ENCODE measurements at regions of chr5 and their contacts with region 1.

Region 1: DNA sequence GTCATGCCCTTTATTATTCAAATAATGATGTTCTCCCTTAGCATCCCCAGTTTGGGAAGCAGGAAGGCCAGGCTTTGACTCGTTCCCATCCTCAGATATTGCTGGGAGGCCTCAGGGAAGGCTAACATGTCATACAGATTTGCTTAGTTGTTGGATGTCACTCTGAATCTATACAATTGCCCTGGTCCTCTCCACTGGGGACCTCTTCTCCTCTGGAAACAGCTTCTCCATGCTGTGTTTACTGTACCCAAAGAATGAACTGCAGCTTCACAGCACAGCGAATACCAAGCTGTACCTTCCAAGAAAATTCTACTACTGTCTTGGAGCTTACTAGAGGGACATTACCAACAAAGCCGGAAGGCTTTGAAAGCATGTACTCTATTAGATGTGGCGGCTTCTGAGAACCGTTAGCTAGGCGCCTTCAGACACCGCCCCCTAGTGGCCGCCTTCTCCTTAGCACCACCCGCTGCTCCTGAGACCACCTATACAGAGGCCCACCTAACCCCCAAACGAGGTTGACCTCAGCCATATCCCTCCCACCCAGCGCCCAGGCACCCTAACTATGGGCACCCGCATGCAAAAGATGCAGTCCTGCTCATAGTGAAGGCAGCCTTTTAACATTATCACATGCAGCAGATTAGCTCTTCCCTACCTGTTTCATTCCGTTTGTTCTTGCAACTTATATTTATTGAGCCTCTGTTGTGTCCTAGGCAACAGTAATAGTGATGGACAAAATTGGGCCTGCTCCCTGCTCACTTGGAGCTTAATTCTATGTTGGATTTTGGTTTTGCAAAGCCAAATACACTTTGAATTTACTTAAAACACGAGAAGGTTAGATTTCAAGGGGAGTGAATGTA is 34.9 kb upstream of the FOXI1 start:
- DNase-seq: peak; percentile 45
- ATAC-seq: no peak
- H3K4me3 Mint-ChIP-seq: no peak overlapping the region
- H3K27ac Mint-ChIP-seq: no peak overlapping the region
- H3K4me1 Mint-ChIP-seq: no peaks in the 10 kb centered on the region
- H3K27me3 Mint-ChIP-seq: no peaks in the 10 kb centered on the region

Region 2: GRCh38 chr5:170059221-170059620 is 11.6 kb before region 1 on chr5:
- CTCF ChIA-PET with region 1: interaction called, 14 read pairs
- POLR2A ChIA-PET with region 1: no interaction called
- intact Hi-C with region 1: no loop called
- DNase-seq: no peak
- ATAC-seq: no peak
- H3K4me3 Mint-ChIP-seq: no peak overlapping the region
- H3K27ac Mint-ChIP-seq: no peak overlapping the region
- H3K4me1 Mint-ChIP-seq: no peaks in the 10 kb centered on the region
- H3K27me3 Mint-ChIP-seq: no peaks in the 10 kb centered on the region

Region 3: GRCh38 chr5:170087168-170087817 is 16.5 kb after region 1 on chr5:
- CTCF ChIA-PET with region 1: interaction called, 15 read pairs
- POLR2A ChIA-PET with region 1: no interaction called
- intact Hi-C with region 1: no loop called
- DNase-seq: no peak
- ATAC-seq: no peak
- H3K4me3 Mint-ChIP-seq: no peak overlapping the region
- H3K27ac Mint-ChIP-seq: peak overlapping the region; percentile 8
- H3K4me1 Mint-ChIP-seq: no peaks in the 10 kb centered on the region
- H3K27me3 Mint-ChIP-seq: no peaks in the 10 kb centered on the region